ENCODE measurements at regions of chr12 and their contacts with region 1.

Region 1: DNA sequence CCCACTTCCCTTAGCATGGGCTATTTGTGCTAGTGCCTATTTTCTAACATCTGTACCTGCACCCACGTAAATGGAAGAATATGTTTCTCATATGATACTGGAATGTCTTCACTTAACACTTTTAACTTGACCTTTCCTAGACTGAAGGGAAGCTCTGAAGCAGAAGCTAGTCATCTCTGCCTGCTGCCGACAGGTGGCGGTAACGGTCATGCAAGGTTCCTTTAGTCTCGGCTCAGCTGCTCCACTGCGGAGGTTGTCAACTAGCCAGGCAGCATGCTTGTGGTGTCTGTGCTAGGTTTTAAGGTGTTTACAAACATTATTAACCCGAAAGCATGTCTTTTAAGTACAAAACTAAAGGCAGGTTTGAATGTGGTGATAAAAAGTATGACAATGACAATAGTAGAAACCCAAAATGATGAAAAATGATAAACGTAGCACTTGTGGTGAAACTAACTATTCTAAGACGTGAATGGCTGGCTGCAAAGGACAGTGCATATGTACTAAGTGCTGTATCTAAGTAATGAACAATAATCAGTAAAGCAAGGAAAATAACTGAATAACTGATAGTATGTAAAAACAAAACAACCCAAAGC is 117.2 kb downstream of the GRIN2B start:
- DNase-seq: peak; percentile 64 to 92 (median 80)

Region 2: DNA sequence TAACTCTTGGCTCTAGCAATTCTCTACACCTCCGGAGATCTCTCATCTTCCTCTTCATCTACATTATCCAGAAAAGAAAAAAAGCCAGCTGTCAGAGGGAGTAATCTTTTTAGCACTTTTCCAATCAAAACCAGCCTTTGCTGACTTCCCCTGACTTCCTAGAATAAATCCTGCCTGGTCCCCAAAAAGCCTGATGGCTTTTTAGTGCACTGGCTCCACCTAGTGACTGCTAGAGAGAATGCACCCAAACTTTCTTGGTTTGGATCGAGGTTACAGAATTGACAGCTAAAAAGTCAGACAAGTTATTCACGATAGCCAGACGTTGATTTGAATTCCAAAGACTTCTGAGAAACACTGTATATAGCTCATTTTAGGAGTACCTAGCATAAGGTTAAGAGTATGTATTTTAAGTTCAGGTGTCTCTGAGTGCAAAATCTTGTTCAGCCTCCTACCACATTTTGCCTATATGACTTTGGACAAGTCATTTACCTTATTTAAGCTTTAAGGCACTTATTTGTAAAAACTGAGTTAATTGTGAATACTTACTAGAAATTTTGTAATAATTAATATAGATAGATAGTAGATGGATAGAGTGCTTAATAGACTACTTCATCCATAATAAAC is 302.9 kb after region 1 on chr12:
- intact Hi-C with region 1: loop called (anchors 5 kb)
- DNase-seq: peak in 40 of 42 donors; percentile 11 to 86 (median 66)

Measured in head of caudate nucleus (tissue), 42 donors.